Naive thymus-derived CD4-positive, alpha-beta T cell (primary cell): ENCODE measurements at regions of chr1 and their contacts with region 1.

Region 1: GRCh38 chr1:101238681-101239094 is 1.9 kb downstream of the S1PR1 start:
- DNase-seq: peak; percentile 74 to 88 (median 83)
- ATAC-seq: peak; percentile 67
- H3K4me3 ChIP-seq: peak overlapping the region; percentile 88
- H3K4me3 Mint-ChIP-seq: peak overlapping the region; percentile 90 to 100 (median 98)
- H3K27ac ChIP-seq: peak overlapping the region; percentile 94
- H3K27ac Mint-ChIP-seq: peak overlapping the region; percentile 93 to 100 (median 99)
- H3K4me1 ChIP-seq: peaks cover 37 to 42% of the 10 kb centered on the region in 2 donors
- H3K4me1 Mint-ChIP-seq: peaks cover 43 to 68% (median 56%) of the 10 kb centered on the region in 7 donors
- H3K27me3 ChIP-seq: no peaks in the 10 kb centered on the region
- H3K27me3 Mint-ChIP-seq: peaks cover 0 to 4% (median 0%) of the 10 kb centered on the region in 5 donors

Region 2: GRCh38 chr1:100921109-100921706 is 317.5 kb before region 1 on chr1:
- CTCF ChIA-PET with region 1: interaction called, 15 read pairs
- POLR2A ChIA-PET with region 1: interaction called, 231 read pairs
- intact Hi-C with region 1: loop called (anchors 1 kb)
- DNase-seq: peak in 6 of 9 donors; percentile 35 to 62 (median 50)
- ATAC-seq: peak; percentile 77
- H3K4me3 ChIP-seq: no peak overlapping the region
- H3K4me3 Mint-ChIP-seq: peak overlapping the region in 1 of 10 donors; percentile 6
- H3K27ac ChIP-seq: peak overlapping the region; percentile 38
- H3K27ac Mint-ChIP-seq: peak overlapping the region in 8 of 9 donors; percentile 28 to 92 (median 88)
- H3K4me1 ChIP-seq: peaks cover 27 to 37% of the 10 kb centered on the region in 2 donors
- H3K4me1 Mint-ChIP-seq: peaks cover 13 to 62% (median 43%) of the 10 kb centered on the region in 7 donors
- H3K27me3 ChIP-seq: no peaks in the 10 kb centered on the region
- H3K27me3 Mint-ChIP-seq: no peaks in the 10 kb centered on the region

Region 3: GRCh38 chr1:101025657-101026504 is 212.8 kb before region 1 on chr1 and contains the start of gene DPH5:
- CTCF ChIA-PET with region 1: interaction called, 3 read pairs
- POLR2A ChIA-PET with region 1: interaction called, 5 read pairs
- intact Hi-C with region 1: loop called (anchors 1 kb)
- DNase-seq: peak; percentile 72 to 91 (median 87)
- ATAC-seq: peak; percentile 99
- H3K4me3 ChIP-seq: peak within 1 kb of the TSS; percentile 85
- H3K4me3 Mint-ChIP-seq: peak within 1 kb of the TSS; percentile 89 to 97 (median 94)
- H3K27ac ChIP-seq: peak within 1 kb of the TSS; percentile 88
- H3K27ac Mint-ChIP-seq: peak within 1 kb of the TSS; percentile 92 to 100 (median 98)
- H3K4me1 ChIP-seq: peaks cover 14 to 44% of the 10 kb centered on the region in 2 donors
- H3K4me1 Mint-ChIP-seq: peaks cover 42 to 95% (median 78%) of the 10 kb centered on the region in 7 donors
- H3K27me3 ChIP-seq: no peaks in the 10 kb centered on the region
- H3K27me3 Mint-ChIP-seq: no peaks in the 10 kb centered on the region
- total RNA-seq, gene DPH5: 26.3 to 72.2 (median 45.3) TPM

Region 4: GRCh38 chr1:101122452-101123166 is 116.1 kb before region 1 on chr1:
- CTCF ChIA-PET with region 1: interaction called, 5 read pairs
- POLR2A ChIA-PET with region 1: interaction called, 88 read pairs
- intact Hi-C with region 1: no loop called
- DNase-seq: peak in 3 of 9 donors; percentile 19 to 32 (median 28)
- ATAC-seq: peak; percentile 66
- H3K4me3 ChIP-seq: no peak overlapping the region
- H3K4me3 Mint-ChIP-seq: peak overlapping the region; percentile 12 to 81 (median 59)
- H3K27ac ChIP-seq: peak overlapping the region; percentile 63
- H3K27ac Mint-ChIP-seq: peak overlapping the region; percentile 36 to 95 (median 91)
- H3K4me1 ChIP-seq: peaks cover 26 to 32% of the 10 kb centered on the region in 2 donors
- H3K4me1 Mint-ChIP-seq: peaks cover 28 to 83% (median 65%) of the 10 kb centered on the region in 7 donors
- H3K27me3 ChIP-seq: no peaks in the 10 kb centered on the region
- H3K27me3 Mint-ChIP-seq: peaks cover 0 to 4% (median 0%) of the 10 kb centered on the region in 5 donors

Region 5: GRCh38 chr1:101216623-101217022 is 22.1 kb before region 1 on chr1:
- CTCF ChIA-PET with region 1: interaction called, 3 read pairs
- POLR2A ChIA-PET with region 1: interaction called, 10 read pairs
- intact Hi-C with region 1: no loop called
- DNase-seq: no peak
- ATAC-seq: no peak
- H3K4me3 ChIP-seq: no peak overlapping the region
- H3K4me3 Mint-ChIP-seq: no peak overlapping the region
- H3K27ac ChIP-seq: no peak overlapping the region
- H3K27ac Mint-ChIP-seq: no peak overlapping the region
- H3K4me1 ChIP-seq: no peaks in the 10 kb centered on the region
- H3K4me1 Mint-ChIP-seq: peaks cover 2 to 14% (median 9%) of the 10 kb centered on the region in 7 donors
- H3K27me3 ChIP-seq: no peaks in the 10 kb centered on the region
- H3K27me3 Mint-ChIP-seq: no peaks in the 10 kb centered on the region

Region 6: GRCh38 chr1:101288491-101288944 is 49.8 kb after region 1 on chr1:
- CTCF ChIA-PET with region 1: interaction called, 110 read pairs
- POLR2A ChIA-PET with region 1: interaction called, 633 read pairs
- intact Hi-C with region 1: loop called (anchors 1 kb)
- DNase-seq: peak in 8 of 9 donors; percentile 48 to 83 (median 78)
- ATAC-seq: peak; percentile 83
- H3K4me3 ChIP-seq: no peak overlapping the region
- H3K4me3 Mint-ChIP-seq: peak overlapping the region in 6 of 10 donors; percentile 4 to 47 (median 20)
- H3K27ac ChIP-seq: peak overlapping the region; percentile 20
- H3K27ac Mint-ChIP-seq: peak overlapping the region; percentile 63 to 93 (median 80)
- H3K4me1 ChIP-seq: peaks cover 66 to 68% of the 10 kb centered on the region in 2 donors
- H3K4me1 Mint-ChIP-seq: peaks cover 55 to 82% (median 73%) of the 10 kb centered on the region in 7 donors
- H3K27me3 ChIP-seq: no peaks in the 10 kb centered on the region
- H3K27me3 Mint-ChIP-seq: no peaks in the 10 kb centered on the region

Region 7: GRCh38 chr1:101302831-101303511 is 64.3 kb after region 1 on chr1:
- CTCF ChIA-PET with region 1: no interaction called
- POLR2A ChIA-PET with region 1: no interaction called
- intact Hi-C with region 1: no loop called
- DNase-seq: no peak
- ATAC-seq: no peak
- H3K4me3 ChIP-seq: no peak overlapping the region
- H3K4me3 Mint-ChIP-seq: no peak overlapping the region
- H3K27ac ChIP-seq: no peak overlapping the region
- H3K27ac Mint-ChIP-seq: no peak overlapping the region
- H3K4me1 ChIP-seq: peaks cover 4 to 8% of the 10 kb centered on the region in 2 donors
- H3K4me1 Mint-ChIP-seq: peaks cover 11 to 23% (median 19%) of the 10 kb centered on the region in 7 donors
- H3K27me3 ChIP-seq: no peaks in the 10 kb centered on the region
- H3K27me3 Mint-ChIP-seq: peaks cover 0 to 40% (median 0%) of the 10 kb centered on the region in 5 donors